Activated CD4-positive, alpha-beta T cell treated with anti-CD3 and anti-CD28 coated beads, Interleukin-2, amount 10 ng/mL, durations not matched to agents 7 days and 5 days (primary cell): ENCODE measurements at regions of chr1 and their contacts with region 1.

Region 1: GRCh38 chr1:110034451-110035235 is at the start of gene STRIP1:
- DNase-seq: peak; percentile 96
- H3K4me3 Mint-ChIP-seq: peak within 1 kb of the TSS; percentile 91
- H3K27ac Mint-ChIP-seq: peak within 1 kb of the TSS; percentile 93
- H3K4me1 Mint-ChIP-seq: peaks cover 65% of the 10 kb centered on the region
- H3K27me3 Mint-ChIP-seq: no peaks in the 10 kb centered on the region
- total RNA-seq, gene STRIP1: 33.4 to 35.9 TPM

Region 2: GRCh38 chr1:109543988-109544735 is 490.5 kb before region 1 on chr1:
- CTCF ChIA-PET with region 1: no interaction called
- POLR2A ChIA-PET with region 1: no interaction called
- DNase-seq: no peak
- H3K4me3 Mint-ChIP-seq: no peak overlapping the region
- H3K27ac Mint-ChIP-seq: peak overlapping the region; percentile 66
- H3K4me1 Mint-ChIP-seq: peaks cover 19% of the 10 kb centered on the region
- H3K27me3 Mint-ChIP-seq: no peaks in the 10 kb centered on the region

Region 3: DNA sequence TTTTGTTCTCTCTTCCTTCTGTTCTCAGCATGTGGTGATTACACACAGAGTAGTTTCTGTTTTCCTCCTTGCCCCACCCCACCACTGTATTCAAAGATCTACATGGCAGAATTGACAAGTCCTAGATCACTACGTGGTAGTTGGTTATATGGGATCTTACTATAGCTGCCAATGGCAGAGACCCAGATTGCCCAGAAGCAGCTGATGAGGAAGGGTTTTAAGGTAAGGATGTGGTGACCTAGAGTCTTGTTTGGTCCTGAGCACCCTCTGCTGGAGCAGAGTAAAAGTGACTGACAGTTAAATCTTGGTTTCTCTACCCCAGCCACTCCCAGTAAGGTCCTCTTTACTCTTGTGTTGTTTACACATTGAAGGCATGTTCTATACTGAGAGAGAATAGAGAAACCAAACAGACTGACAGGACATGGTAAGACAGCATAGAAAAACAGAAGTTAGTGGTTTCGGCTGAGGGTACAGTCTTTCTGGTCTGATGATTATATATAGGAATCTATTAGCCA is 23.1 kb before region 1 on chr1:
- CTCF ChIA-PET with region 1: interaction called, 11 read pairs
- POLR2A ChIA-PET with region 1: no interaction called
- DNase-seq: peak; percentile 60
- H3K4me3 Mint-ChIP-seq: no peak overlapping the region
- H3K27ac Mint-ChIP-seq: peak overlapping the region; percentile 68
- H3K4me1 Mint-ChIP-seq: peaks cover 7% of the 10 kb centered on the region
- H3K27me3 Mint-ChIP-seq: no peaks in the 10 kb centered on the region

Region 4: DNA sequence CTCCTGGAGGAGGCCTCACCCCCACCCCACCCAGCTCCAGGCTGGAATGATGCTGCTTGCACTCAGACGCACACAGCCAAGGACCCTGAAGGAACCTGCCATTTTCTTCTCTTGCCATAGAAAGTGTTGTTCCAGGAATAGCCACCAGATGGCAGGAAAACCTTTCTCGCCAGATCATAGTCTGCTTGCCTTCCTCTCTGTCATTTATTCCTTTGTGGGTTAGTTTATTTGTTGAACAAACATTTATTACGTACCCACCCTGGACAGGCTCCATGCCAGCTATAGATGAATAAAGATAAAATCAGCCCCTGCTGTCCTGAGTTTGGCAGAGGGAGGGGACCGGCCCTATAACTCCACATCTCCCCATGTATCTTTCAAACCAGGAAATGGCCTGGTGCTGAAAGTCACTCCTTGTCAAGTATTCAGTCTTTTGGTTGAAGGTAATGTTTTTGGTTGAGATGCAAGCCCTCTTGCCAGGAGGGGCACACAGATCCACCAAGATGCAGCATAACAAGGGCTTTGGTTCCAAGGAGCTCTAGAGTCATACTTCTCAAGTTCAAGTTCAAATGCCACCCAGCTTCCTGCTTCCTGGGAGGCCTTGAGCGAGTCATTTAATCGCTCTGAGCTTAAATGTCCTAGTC is 168.5 kb after region 1 on chr1:
- CTCF ChIA-PET with region 1: no interaction called
- POLR2A ChIA-PET with region 1: no interaction called
- DNase-seq: peak; percentile 85
- H3K4me3 Mint-ChIP-seq: no peak overlapping the region
- H3K27ac Mint-ChIP-seq: peak overlapping the region; percentile 92
- H3K4me1 Mint-ChIP-seq: peaks cover 25% of the 10 kb centered on the region
- H3K27me3 Mint-ChIP-seq: no peaks in the 10 kb centered on the region